CD4-positive, alpha-beta T cell (primary cell): ENCODE measurements at regions of chr9 and their contacts with region 1.

Region 1: DNA sequence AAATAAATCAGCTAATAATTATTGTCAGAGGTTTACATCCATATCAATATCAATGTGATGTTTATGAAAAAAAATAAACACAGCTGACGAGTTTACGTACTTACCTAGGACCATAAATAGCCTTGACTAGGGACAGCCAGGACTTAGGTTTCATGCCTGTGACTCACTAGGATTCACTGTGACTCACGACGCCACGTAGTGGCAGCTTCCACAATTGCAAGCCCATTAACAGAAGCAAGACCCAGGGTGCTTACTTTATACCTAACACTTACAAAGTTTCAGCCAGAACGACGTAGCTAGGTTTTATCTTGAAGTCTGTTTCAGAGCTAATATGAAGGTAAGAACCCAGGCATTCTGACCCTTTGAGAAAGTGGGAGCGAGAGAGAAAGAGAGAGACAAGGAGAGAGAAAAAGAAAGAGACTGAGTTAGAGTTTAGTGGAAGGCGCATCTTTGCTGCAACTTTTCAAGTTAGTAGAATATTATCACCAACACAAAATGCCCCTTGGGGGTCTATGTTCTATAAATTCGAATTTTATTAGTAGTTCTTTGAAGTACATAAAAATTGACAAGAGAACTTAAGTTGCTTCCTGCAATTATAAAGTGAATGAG is 191.2 kb downstream of the GNA14 start:
- DNase-seq: peak; percentile 62 to 86 (median 76)
- ATAC-seq: peak; percentile 81
- H3K4me3 ChIP-seq: no peak overlapping the region
- H3K4me3 Mint-ChIP-seq: no peak overlapping the region
- H3K27ac ChIP-seq: no peak overlapping the region
- H3K27ac Mint-ChIP-seq: no peak overlapping the region
- H3K4me1 ChIP-seq: peaks cover 8% of the 10 kb centered on the region
- H3K4me1 Mint-ChIP-seq: peaks cover 29% of the 10 kb centered on the region
- H3K27me3 ChIP-seq: no peaks in the 10 kb centered on the region
- H3K27me3 Mint-ChIP-seq: no peaks in the 10 kb centered on the region
- CTCF ChIP-seq: peak; percentile 80

Region 2: GRCh38 chr9:77170991-77171699 is 285.8 kb before region 1 on chr9:
- CTCF ChIA-PET with region 1: no interaction called
- POLR2A ChIA-PET with region 1: no interaction called
- intact Hi-C with region 1: loop called in 1 of 2 experiments (anchors 1 kb)
- DNase-seq: no peak
- ATAC-seq: no peak
- H3K4me3 ChIP-seq: no peak overlapping the region
- H3K4me3 Mint-ChIP-seq: no peak overlapping the region
- H3K27ac ChIP-seq: no peak overlapping the region
- H3K27ac Mint-ChIP-seq: peak overlapping the region; percentile 2
- H3K4me1 ChIP-seq: no peaks in the 10 kb centered on the region
- H3K4me1 Mint-ChIP-seq: peaks cover 6% of the 10 kb centered on the region
- H3K27me3 ChIP-seq: no peaks in the 10 kb centered on the region
- H3K27me3 Mint-ChIP-seq: no peaks in the 10 kb centered on the region
- CTCF ChIP-seq: no peak

Region 3: DNA sequence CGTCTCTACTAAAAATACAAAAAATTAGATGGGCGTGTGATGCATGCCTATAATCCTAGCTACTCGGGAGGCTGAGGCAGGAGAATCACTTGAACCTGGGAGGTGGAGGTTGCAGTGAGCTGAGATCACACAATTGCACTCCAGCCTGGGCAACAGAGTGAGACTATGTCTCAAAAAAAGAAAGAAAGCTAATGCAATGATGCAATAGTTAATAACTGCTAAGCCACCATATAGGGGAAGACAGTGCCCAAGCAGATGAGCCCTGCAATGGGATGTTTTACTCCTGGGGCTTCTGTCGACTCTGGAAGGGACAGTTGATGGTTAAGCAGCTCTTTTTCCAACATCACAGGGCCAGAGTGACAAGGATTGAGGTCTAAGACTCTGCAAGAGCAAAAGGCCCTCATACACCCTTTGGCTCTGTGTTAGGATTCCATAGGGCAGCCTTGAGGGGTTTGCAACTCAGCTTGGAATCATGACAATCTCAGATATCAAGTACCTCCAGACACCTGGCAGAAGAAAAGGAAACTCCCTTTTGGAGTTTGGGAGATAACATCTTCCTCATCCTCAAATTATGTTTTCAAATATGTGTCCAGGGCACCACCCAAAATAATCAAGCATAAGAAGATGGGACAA is 14.6 kb before region 1 on chr9:
- CTCF ChIA-PET with region 1: interaction called, 12 read pairs
- POLR2A ChIA-PET with region 1: no interaction called
- intact Hi-C with region 1: no loop called
- DNase-seq: no peak
- ATAC-seq: no peak
- H3K4me3 ChIP-seq: no peak overlapping the region
- H3K4me3 Mint-ChIP-seq: no peak overlapping the region
- H3K27ac ChIP-seq: no peak overlapping the region
- H3K27ac Mint-ChIP-seq: no peak overlapping the region
- H3K4me1 ChIP-seq: no peaks in the 10 kb centered on the region
- H3K4me1 Mint-ChIP-seq: no peaks in the 10 kb centered on the region
- H3K27me3 ChIP-seq: no peaks in the 10 kb centered on the region
- H3K27me3 Mint-ChIP-seq: no peaks in the 10 kb centered on the region
- CTCF ChIP-seq: no peak

Region 4: DNA sequence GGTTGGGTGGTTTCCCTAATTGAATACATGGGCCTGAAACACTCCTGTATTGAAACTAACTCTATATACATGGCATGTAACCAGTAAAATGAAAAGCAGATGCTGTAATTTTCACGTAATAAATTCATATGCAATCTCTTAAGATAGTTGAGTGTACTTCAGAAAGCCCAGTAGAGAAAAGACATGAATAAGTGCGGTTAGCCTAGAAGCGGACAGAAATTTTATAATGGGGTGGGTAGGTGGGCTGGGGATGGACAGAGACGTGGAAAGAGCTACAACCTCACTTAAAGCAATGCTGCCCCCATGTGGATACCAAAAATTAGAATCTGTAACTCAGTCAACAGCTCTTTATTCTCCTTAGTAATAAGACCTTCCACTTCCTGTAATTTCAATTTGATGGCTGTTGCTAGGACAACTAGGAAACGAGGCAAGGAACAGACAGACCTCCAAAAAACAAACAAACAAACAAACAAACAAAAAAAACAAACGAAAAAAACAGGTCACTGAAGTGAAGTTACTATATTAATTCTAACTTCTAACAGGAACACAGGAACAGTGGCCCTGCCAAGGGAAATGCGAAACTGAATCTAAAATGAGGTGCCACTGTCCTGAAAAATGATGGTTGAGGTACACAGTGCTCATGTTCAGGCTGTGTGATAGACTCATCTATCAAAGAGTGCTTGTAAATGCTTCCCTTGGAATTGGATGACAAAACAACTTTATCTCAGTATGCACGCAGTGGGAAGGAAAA is 294.6 kb after region 1 on chr9:
- CTCF ChIA-PET with region 1: no interaction called
- POLR2A ChIA-PET with region 1: no interaction called
- intact Hi-C with region 1: loop called in 1 of 2 experiments (anchors 10 kb)
- DNase-seq: peak in 4 of 14 experiments; percentile 24 to 47 (median 39)
- ATAC-seq: no peak
- H3K4me3 ChIP-seq: no peak overlapping the region
- H3K4me3 Mint-ChIP-seq: no peak overlapping the region
- H3K27ac ChIP-seq: no peak overlapping the region
- H3K27ac Mint-ChIP-seq: no peak overlapping the region
- H3K4me1 ChIP-seq: no peaks in the 10 kb centered on the region
- H3K4me1 Mint-ChIP-seq: peaks cover 32% of the 10 kb centered on the region
- H3K27me3 ChIP-seq: no peaks in the 10 kb centered on the region
- H3K27me3 Mint-ChIP-seq: no peaks in the 10 kb centered on the region
- CTCF ChIP-seq: peak; percentile 38